ENCODE measurements at regions of chr3 and their contacts with region 1.

Region 1: GRCh38 chr3:66195347-66195783 is 25.4 kb upstream of the SLC25A26 start:
- DNase-seq: no peak

Region 2: GRCh38 chr3:65425880-65426279 is 769.5 kb before region 1 on chr3:
- intact Hi-C with region 1: loop called (anchors 10 kb)
- DNase-seq: no peak

Region 3: DNA sequence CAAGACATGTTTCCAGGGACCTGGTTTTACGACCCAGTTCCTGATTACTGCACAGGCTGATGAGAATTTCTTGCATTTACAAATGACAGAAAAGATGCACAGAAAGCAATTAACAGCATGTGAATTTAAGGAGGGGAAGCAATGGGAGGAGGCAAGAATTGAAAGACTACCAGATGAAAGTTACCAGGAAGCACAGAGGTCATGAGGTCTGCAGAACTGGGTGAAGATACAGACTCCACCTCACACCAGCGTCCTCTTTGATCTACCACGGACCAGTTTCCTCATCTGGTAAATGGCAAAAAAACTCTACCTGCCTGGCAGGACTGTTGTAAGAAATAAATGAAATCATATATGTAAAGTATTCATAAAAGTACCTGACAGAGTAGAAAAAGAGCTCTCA is 422.6 kb before region 1 on chr3:
- intact Hi-C with region 1: no loop called
- DNase-seq: no peak

Region 4: DNA sequence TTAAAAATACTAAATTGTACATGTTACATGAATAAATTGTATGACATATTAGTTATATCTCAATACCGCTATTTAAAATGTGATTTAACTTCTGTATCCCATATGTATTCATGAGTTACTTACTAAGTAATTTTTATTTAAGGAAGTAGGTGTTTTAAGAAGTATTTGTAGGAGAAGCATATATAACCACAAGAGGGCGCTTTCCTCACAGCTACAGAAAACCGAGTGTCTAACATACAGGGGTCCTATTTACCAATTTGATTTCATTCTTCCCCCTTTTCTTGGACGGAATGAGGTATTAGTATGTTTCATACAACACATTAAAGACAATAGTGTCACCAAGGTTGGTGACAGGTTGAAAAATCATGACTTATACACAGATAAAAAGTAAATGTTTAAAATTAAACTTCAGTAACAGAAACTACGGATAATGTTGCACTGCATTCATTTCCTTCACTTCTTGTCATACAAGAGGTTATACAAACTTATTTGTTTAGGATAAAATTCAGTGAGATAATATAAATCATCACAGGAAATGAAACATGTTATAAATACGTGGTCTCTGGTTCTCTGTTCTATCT is 410.2 kb before region 1 on chr3:
- intact Hi-C with region 1: loop called (anchors 2 kb)
- DNase-seq: no peak

Region 5: GRCh38 chr3:66153481-66154443 is 41.6 kb before region 1 on chr3:
- intact Hi-C with region 1: loop called (anchors 1 kb)
- DNase-seq: no peak

Region 6: GRCh38 chr3:66500576-66501482 is 305.5 kb after region 1 on chr3 and contains the start of gene LRIG1:
- intact Hi-C with region 1: no loop called
- DNase-seq: peak; percentile 100
- total RNA-seq, gene LRIG1: 77.1 TPM